Endothelial cell of umbilical vein (primary cell): ENCODE measurements at regions of chr4 and their contacts with region 1.

Region 1: DNA sequence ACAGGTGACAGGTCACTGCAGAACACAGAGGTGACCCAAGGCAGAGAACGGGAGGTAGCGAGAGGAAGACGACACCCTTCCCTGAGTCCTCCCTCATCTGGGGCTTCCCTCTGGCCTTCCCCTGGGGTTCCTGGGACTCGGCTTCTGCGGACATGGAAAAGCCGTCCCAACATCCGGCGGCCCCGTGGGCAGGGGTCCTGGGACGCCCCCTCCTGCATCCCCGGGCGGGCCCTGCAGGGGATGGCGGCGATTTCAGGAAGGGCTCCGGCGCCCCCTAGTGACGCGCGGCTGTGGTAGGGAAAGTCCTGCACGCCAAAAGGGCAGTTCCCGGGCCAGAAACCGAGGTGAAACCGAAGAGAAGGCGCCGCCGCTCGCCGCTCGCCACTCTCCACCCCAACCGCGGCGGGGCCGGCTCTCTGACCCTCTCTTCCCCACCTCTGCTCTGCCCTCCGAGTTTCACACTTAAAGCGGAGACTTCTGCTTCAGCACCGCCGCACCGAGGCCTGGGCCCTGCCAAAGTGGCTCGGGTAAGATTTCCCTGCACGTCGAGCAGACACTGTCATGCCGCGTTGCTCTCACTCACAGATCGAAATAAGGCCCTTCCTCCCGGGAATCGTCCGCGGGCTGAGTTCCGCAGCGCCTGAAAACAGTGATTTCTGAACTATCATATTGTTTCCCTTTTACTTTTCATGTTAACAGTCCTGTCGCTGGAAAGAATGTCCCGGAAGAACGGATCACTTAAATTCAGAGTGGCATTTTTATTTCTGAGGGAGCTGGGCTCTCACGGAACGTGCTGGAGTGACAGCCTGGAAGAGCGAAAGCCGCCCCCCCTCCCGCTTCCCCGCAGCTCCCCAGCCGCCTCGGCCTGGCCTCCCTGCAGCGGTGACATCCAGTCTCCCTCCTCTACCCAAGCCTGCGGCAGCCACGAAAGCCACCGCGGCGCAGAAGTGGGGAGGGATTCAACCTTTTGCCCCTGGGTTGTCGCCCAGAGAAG is 110.6 kb downstream of the DCTD start:
- DNase-seq: peak; percentile 79
- H3K4me3 ChIP-seq: peak overlapping the region; percentile 38 to 62 (median 49)
- H3K27ac ChIP-seq: peak overlapping the region; percentile 31
- H3K4me1 ChIP-seq: no peaks in the 10 kb centered on the region
- H3K27me3 ChIP-seq: no peaks in the 10 kb centered on the region
- CTCF ChIP-seq: peak; percentile 86 to 96
- POLR2A ChIP-seq: no peak

Region 2: DNA sequence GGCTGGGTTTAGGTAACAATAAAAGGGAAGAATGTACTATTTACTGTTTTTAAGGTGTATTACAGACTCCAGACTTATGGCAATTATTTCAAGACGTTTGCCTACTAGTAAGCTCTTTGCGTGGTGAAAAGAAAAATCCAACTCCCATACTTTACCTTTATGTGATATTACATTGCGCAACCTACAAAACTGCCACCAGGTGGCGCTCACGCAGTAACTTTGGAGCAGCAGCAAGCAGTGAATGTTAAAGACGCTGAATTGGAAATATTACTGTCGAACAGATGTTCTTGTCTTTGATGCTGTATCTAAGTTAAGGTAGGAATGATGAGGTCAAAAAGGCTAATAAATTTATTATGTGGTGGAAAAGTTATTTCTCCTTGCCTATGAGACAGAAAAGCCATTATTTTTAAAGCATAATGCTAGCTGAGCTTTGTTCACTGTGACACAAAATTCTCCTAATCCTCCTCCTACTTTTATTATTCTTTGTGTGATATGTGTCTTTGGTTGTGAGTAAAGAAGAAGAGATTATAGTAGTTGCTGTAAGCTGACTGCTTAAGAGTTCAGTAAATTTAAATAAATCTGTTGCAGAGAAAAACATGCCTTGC is 1663.2 kb before region 1 on chr4:
- CTCF ChIA-PET with region 1: interaction called, 7 read pairs
- POLR2A ChIA-PET with region 1: no interaction called
- dilution Hi-C with region 1: no loop called
- intact Hi-C with region 1: loop called (anchors 1 kb)
- DNase-seq: peak; percentile 60
- H3K4me3 ChIP-seq: no peak overlapping the region
- H3K27ac ChIP-seq: no peak overlapping the region
- H3K4me1 ChIP-seq: no peaks in the 10 kb centered on the region
- H3K27me3 ChIP-seq: no peaks in the 10 kb centered on the region
- CTCF ChIP-seq: peak; percentile 72 to 75
- POLR2A ChIP-seq: no peak

Region 3: DNA sequence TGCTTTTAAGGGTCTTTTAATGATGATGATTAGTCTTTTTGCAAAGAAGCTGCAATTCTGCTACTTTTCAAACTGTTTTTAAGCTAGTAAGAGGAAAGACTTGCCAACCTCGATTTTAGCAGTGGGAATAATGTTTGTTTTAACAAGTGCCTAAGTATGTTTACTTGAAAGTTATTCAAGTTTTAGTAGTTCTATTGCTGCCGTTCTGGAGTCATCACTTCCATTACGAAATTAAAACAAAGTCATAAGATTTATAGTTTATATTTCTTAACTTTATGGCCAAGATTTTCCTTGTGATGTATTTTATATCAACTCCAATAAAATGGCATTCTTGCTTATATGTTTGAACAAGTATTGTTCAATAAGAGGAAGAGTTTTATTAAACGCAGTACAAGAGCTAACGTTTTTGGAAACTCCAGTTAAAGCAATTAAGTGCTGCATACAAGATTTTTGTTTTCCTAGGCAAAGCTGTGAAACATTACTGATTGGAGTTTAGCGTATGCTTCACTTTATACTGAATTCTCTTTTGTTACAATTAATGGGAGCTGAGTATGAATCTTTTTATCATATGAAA is 352.0 kb before region 1 on chr4:
- CTCF ChIA-PET with region 1: interaction called, 4 read pairs
- POLR2A ChIA-PET with region 1: no interaction called
- dilution Hi-C with region 1: no loop called
- intact Hi-C with region 1: loop called (anchors 1 kb)
- DNase-seq: no peak
- H3K4me3 ChIP-seq: no peak overlapping the region
- H3K27ac ChIP-seq: no peak overlapping the region
- H3K4me1 ChIP-seq: peaks cover 4% of the 10 kb centered on the region
- H3K27me3 ChIP-seq: peaks cover 19 to 36% of the 10 kb centered on the region in 2 experiments
- CTCF ChIP-seq: no peak
- POLR2A ChIP-seq: no peak

Region 4: DNA sequence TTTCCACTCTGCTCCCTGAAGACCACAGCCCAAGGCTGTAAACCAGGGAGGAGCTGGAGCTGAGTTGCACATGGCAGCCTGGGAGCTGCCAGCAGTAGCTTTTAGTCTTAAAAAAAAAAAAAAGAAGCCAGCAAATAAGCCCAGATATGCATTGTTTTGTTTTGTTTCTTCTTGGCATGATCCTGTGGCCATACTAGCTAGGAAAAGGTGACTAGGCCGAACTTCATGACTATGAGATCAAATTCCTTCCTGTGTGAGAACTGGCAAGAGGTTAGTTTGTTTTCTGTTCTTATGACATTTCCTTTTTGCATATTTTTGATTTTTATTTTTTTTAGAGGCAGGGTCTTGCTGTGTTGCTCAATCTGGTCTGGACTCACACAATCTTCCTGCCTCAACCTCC is 212.7 kb before region 1 on chr4:
- CTCF ChIA-PET with region 1: interaction called, 12 read pairs
- POLR2A ChIA-PET with region 1: no interaction called
- dilution Hi-C with region 1: no loop called
- intact Hi-C with region 1: loop called (anchors 2 kb)
- DNase-seq: peak; percentile 95
- H3K4me3 ChIP-seq: peak overlapping the region in 1 of 3 experiments; percentile 44
- H3K27ac ChIP-seq: peak overlapping the region; percentile 91
- H3K4me1 ChIP-seq: peaks cover 26% of the 10 kb centered on the region
- H3K27me3 ChIP-seq: no peaks in the 10 kb centered on the region
- CTCF ChIP-seq: no peak
- POLR2A ChIP-seq: no peak

Region 5: DNA sequence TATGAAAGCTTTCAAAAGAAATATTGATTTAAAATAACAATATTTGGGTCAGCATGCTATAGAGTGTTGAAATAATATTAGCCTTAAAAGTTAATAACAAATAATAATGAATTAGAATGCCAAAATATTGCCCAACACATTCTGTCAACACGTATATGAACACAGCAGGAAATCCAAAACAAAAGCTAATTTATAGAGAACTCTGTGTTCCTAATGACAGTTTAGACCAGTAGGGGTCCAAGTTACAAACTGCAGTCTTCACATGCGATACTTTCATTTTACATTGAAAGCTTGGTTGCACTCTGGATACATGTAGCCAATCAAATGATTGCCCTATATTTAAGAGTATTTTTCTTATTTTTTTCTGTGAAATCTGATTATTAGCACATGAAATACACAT is 163.7 kb before region 1 on chr4:
- CTCF ChIA-PET with region 1: interaction called, 18 read pairs
- POLR2A ChIA-PET with region 1: no interaction called
- dilution Hi-C with region 1: no loop called
- intact Hi-C with region 1: no loop called
- DNase-seq: peak; percentile 54
- H3K4me3 ChIP-seq: no peak overlapping the region
- H3K27ac ChIP-seq: no peak overlapping the region
- H3K4me1 ChIP-seq: no peaks in the 10 kb centered on the region
- H3K27me3 ChIP-seq: no peaks in the 10 kb centered on the region
- CTCF ChIP-seq: peak; percentile 4 to 21
- POLR2A ChIP-seq: no peak

Region 6: GRCh38 chr4:182925298-182925738 is 118.8 kb after region 1 on chr4:
- CTCF ChIA-PET with region 1: interaction called, 3 read pairs
- POLR2A ChIA-PET with region 1: no interaction called
- dilution Hi-C with region 1: no loop called
- intact Hi-C with region 1: loop called (anchors 5 kb)
- DNase-seq: peak; percentile 69
- H3K4me3 ChIP-seq: no peak overlapping the region
- H3K27ac ChIP-seq: no peak overlapping the region
- H3K4me1 ChIP-seq: no peaks in the 10 kb centered on the region
- H3K27me3 ChIP-seq: peaks cover 13 to 38% of the 10 kb centered on the region in 2 experiments
- CTCF ChIP-seq: peak; percentile 28 to 53
- POLR2A ChIP-seq: no peak